Activated CD4-positive, alpha-beta memory T cell treated with anti-CD3 and anti-CD28 coated beads for 36 hours (primary cell): ENCODE measurements at regions of chr2 and their contacts with region 1.

Region 1: GRCh38 chr2:86035883-86036668 is 69.6 kb downstream of the POLR1A start:
- DNase-seq: peak; percentile 82
- H3K4me3 Mint-ChIP-seq: peak overlapping the region; percentile 51
- H3K27ac Mint-ChIP-seq: peak overlapping the region; percentile 92
- H3K4me1 Mint-ChIP-seq: peaks cover 67% of the 10 kb centered on the region
- H3K27me3 Mint-ChIP-seq: no peaks in the 10 kb centered on the region

Region 2: GRCh38 chr2:85826990-85827878 is 208.8 kb before region 1 on chr2:
- CTCF ChIA-PET with region 1: interaction called, 137 read pairs
- POLR2A ChIA-PET with region 1: interaction called, 4 read pairs
- intact Hi-C with region 1: loop called (anchors 1 kb)
- DNase-seq: peak; percentile 86
- H3K4me3 Mint-ChIP-seq: no peak overlapping the region
- H3K27ac Mint-ChIP-seq: no peak overlapping the region
- H3K4me1 Mint-ChIP-seq: peaks cover 15% of the 10 kb centered on the region
- H3K27me3 Mint-ChIP-seq: peaks cover 3% of the 10 kb centered on the region

Region 3: GRCh38 chr2:85888684-85889626 is 147.1 kb before region 1 on chr2 and contains the start of gene ST3GAL5:
- CTCF ChIA-PET with region 1: interaction called, 50 read pairs
- POLR2A ChIA-PET with region 1: interaction called, 16 read pairs
- intact Hi-C with region 1: loop called (anchors 1 kb)
- DNase-seq: peak; percentile 91
- H3K4me3 Mint-ChIP-seq: peak within 1 kb of the TSS; percentile 90
- H3K27ac Mint-ChIP-seq: peak within 1 kb of the TSS; percentile 78
- H3K4me1 Mint-ChIP-seq: peaks cover 59% of the 10 kb centered on the region
- H3K27me3 Mint-ChIP-seq: no peaks in the 10 kb centered on the region
- total RNA-seq, gene ST3GAL5: 9.6 to 11.5 TPM

Region 4: GRCh38 chr2:86068136-86068588 is 32.1 kb after region 1 on chr2:
- CTCF ChIA-PET with region 1: no interaction called
- POLR2A ChIA-PET with region 1: interaction called, 3 read pairs
- intact Hi-C with region 1: loop called (anchors 1 kb)
- DNase-seq: peak; percentile 72
- H3K4me3 Mint-ChIP-seq: no peak overlapping the region
- H3K27ac Mint-ChIP-seq: peak overlapping the region; percentile 29
- H3K4me1 Mint-ChIP-seq: peaks cover 13% of the 10 kb centered on the region
- H3K27me3 Mint-ChIP-seq: no peaks in the 10 kb centered on the region

Region 5: DNA sequence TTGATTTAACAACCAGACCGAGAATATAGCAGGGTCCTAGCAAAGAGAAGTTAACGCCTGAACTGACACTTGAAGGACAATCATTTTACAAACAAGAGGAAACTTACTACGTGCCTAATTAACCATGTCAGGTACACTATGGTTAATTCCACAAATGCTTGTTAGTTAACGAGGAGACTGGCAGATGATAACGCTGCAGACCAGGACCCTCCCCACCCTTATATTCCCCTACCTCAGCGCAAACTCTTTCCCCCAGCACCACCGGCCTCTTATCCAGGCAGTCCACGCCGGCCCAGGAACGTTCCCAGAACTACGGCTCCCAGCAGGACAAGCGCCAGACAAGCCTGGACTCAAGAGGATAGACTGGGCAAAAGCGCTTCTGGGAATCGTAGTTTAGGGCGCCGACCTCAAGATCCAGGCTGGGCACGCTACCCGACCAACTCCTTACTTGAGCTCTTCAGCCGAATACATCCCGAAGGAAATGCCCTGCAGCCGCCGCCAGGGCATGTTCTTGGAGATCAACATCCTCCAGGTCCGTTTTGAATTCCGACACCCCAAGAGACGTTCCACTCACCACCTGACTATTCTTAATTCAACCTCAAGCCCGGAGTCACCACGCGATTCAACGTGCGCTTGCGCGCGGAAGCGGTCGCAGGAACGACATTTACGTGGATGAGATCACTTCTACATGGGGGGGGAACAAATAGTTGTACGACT is 69.3 kb after region 1 on chr2 and contains the start of gene POLR1A:
- CTCF ChIA-PET with region 1: interaction called, 3 read pairs
- POLR2A ChIA-PET with region 1: no interaction called
- intact Hi-C with region 1: loop called (anchors 1 kb)
- DNase-seq: peak; percentile 90
- H3K4me3 Mint-ChIP-seq: peak within 1 kb of the TSS; percentile 94
- H3K27ac Mint-ChIP-seq: peak within 1 kb of the TSS; percentile 95
- H3K4me1 Mint-ChIP-seq: peaks cover 61% of the 10 kb centered on the region
- H3K27me3 Mint-ChIP-seq: no peaks in the 10 kb centered on the region
- total RNA-seq, gene POLR1A: 27.2 to 33.8 TPM

Region 6: DNA sequence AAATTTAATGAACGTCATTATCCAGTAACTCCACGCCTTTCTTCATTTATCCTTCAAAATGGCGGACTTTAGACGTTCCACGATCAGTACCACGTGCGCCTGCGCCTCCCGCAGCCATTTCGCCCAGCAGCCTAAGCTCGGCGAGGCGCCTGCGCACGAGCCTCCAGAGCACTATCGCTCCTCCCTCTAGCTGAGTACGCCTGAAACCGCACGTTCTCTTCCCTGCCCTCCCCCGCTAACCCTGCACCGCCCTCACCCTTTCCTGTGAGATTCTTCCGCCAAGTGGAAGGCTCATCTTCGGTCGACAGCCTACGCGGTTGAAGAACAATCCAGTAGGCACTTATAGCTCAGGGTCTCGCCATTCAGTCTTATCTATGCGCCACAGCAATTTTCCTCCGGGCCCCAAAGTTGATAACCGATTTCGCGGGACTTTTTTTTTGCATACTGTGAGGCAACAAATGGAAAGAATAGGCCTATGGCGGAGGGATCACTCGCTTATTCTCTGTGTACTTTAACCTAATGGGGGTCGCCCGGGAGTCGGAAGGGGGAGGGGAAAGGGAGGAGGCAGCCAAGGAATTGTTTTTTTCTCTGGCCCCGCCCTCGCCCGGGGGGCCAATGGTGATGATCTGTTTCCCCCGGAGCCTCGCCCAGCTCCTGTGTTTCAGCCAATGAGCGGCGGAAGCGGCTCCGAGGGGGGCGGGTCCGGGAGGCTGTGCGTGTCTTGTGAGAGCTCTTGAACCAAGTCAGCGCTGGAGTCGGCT is 404.7 kb after region 1 on chr2 and contains the start of gene KDM3A:
- CTCF ChIA-PET with region 1: no interaction called
- POLR2A ChIA-PET with region 1: no interaction called
- intact Hi-C with region 1: loop called (anchors 5 kb)
- DNase-seq: peak; percentile 100
- H3K4me3 Mint-ChIP-seq: peak within 1 kb of the TSS; percentile 94
- H3K27ac Mint-ChIP-seq: peak within 1 kb of the TSS; percentile 100
- H3K4me1 Mint-ChIP-seq: peaks cover 37% of the 10 kb centered on the region
- H3K27me3 Mint-ChIP-seq: no peaks in the 10 kb centered on the region
- total RNA-seq, gene KDM3A: 55.6 to 64.9 TPM